RWPE1 (cell line): ENCODE measurements at regions of chr6 and their contacts with region 1.

Region 1: DNA sequence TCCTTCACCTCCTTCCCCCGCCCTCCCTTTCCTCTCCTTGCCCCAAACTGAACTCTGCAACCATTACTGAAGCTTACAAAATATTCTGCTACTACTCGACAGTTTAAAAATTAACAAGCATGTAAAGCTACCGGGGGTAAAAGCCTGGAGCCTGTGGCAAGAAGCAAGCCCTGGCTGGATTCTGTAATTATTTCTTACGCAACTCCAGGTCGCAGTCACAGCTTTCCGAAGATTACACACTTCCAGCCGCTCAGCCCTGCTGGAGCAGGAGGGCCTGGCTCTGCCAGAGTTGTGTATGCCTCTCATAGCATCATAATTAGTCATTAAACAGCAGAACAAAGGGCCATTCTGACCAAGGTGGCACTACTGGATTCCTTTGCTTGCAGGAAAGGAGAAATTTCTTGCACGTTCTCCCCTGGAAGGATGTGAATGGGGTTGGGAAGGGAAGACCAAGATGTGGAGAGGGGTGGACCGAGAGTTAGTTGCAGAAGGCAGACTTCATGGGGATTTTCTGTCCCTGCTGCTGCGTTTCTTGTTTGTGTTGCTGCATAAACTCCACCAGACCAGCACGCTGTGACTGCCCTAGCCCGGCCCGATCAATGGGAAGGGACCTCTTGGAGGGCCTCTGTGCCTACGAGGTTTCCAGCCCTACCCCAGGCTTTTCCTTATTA is 23.6 kb downstream of the FOXQ1 start:
- DNase-seq: peak; percentile 89
- H3K27ac ChIP-seq: peak overlapping the region; percentile 88
- CTCF ChIP-seq: no peak

Region 2: GRCh38 chr6:356828-357251 is 978.7 kb before region 1 on chr6:
- CTCF ChIA-PET with region 1: no interaction called
- POLR2A ChIA-PET with region 1: no interaction called
- DNase-seq: no peak
- H3K27ac ChIP-seq: no peak overlapping the region
- CTCF ChIP-seq: no peak

Region 3: GRCh38 chr6:797479-798077 is 537.9 kb before region 1 on chr6:
- CTCF ChIA-PET with region 1: interaction called, 14 read pairs
- POLR2A ChIA-PET with region 1: no interaction called
- DNase-seq: peak; percentile 9
- H3K27ac ChIP-seq: no peak overlapping the region
- CTCF ChIP-seq: peak; percentile 76

Region 4: GRCh38 chr6:912871-913835 is 422.3 kb before region 1 on chr6:
- CTCF ChIA-PET with region 1: interaction called, 28 read pairs
- POLR2A ChIA-PET with region 1: no interaction called
- DNase-seq: peak; percentile 44
- H3K27ac ChIP-seq: no peak overlapping the region
- CTCF ChIP-seq: peak; percentile 64

Region 5: DNA sequence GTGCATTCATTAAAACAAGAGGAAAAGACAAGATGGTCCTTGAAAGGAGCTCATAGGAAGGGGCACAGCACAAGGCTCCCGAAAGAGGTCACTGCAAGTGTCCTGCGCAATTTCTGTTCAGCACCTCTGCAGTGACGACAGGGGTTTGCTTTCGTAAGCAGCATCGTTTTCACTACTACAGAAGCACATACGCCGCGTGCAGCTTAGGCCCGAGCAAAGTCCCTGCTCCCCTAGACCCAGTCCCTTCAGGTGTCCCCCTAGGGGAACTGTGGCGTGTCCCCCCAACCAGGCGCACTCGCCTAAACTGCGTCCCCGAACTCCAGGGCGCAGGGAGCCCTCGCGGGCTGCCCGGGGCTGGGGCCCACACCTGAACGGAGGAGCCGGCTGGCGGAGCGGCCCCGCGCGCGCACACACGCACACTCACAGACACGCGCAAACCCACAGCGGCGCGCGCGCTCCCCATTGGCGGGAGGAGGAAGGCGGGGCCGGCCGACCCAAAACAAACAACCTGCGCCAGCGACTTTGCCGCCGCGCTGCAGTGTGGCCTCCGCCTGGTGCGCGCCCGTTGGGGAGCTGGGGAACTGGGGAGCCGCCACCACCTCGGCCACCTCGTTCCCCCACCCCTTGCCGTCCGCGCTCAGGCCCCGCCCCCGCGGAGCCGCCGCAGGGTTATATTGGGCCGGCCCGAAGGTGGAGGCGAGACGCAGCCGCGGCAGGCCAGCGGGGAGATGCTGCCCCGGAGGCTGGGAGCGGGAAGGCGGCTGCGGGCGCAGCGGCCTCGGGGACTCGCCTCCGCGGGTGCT is 23.9 kb before region 1 on chr6 and contains the start of gene FOXQ1:
- CTCF ChIA-PET with region 1: interaction called, 11 read pairs
- POLR2A ChIA-PET with region 1: no interaction called
- DNase-seq: peak; percentile 66
- H3K27ac ChIP-seq: peak within 1 kb of the TSS; percentile 60
- CTCF ChIP-seq: no peak